Testis (tissue), 5 donors: ENCODE measurements at regions of chr20 and their contacts with region 1.

Region 1: DNA sequence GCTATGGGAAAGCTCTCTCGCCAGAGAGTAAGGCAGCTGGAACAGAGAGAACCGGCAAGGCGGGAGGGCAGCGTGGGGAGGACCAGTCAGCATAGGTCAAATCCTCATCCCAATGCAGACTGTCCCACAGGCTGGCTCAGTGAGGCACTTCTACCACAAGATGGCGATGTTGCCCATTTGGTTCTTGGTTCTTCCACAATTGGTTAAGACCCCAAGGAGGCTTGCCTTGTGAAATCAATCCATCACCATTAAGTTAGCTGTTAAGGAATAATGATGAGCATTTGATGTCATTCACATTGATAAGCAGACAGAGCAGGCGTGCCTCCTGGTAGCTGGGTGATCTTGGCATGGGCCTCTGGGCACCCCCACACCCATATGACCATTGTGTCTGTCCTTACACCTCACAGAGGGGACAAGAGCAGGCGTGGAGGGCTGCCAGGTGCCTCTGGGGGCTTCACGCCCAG is 2.4 kb downstream of the CSTL1 start:
- DNase-seq: peak; percentile 89
- H3K4me3 ChIP-seq: no peak overlapping the region
- H3K27ac ChIP-seq: no peak overlapping the region
- H3K4me1 ChIP-seq: peaks cover 6% of the 10 kb centered on the region
- H3K27me3 ChIP-seq: no peaks in the 10 kb centered on the region
- CTCF ChIP-seq: peak; percentile 73 to 90 (median 78)
- POLR2A ChIP-seq: no peak

Region 2: GRCh38 chr20:23381876-23382275 is 60.0 kb before region 1 on chr20:
- intact Hi-C with region 1: no loop called
- DNase-seq: no peak
- H3K4me3 ChIP-seq: no peak overlapping the region
- H3K27ac ChIP-seq: no peak overlapping the region
- H3K4me1 ChIP-seq: no peaks in the 10 kb centered on the region
- H3K27me3 ChIP-seq: no peaks in the 10 kb centered on the region
- CTCF ChIP-seq: no peak
- POLR2A ChIP-seq: no peak

Region 3: GRCh38 chr20:23606652-23607049 is 164.8 kb after region 1 on chr20:
- intact Hi-C with region 1: loop called (anchors 10 kb)
- DNase-seq: peak; percentile 88
- H3K4me3 ChIP-seq: no peak overlapping the region
- H3K27ac ChIP-seq: no peak overlapping the region
- H3K4me1 ChIP-seq: peaks cover 3% of the 10 kb centered on the region
- H3K27me3 ChIP-seq: no peaks in the 10 kb centered on the region
- CTCF ChIP-seq: peak; percentile 73 to 84 (median 79)
- POLR2A ChIP-seq: no peak